ENCODE measurements at regions of chr5 and their contacts with region 1.

Region 1: DNA sequence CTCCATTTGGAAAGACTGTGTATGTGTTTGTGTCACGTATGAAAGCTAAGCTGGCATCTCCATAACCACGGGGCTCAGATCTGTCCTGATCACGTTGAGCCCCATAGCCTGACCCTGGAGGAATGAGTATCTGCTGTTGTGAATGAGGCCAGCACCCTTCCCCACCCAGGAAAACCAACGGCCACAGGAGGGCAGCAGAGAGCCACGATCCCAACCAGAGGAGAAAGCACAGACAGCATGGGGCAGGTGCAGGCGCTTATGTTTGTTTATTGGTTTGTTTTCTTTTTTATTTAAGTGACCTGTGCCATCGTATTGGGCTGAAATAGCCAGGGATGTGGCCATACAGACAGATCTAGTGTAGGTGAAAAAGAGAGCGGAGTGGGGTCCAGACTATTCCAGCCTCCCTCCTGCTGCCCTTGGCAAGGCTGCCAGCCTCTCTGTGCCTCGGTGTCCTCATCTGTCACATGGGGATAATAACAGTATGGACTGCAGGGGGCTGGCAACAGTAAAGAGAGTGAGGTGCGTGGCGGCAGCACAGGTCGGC is 12.0 kb downstream of the OR2V2 start:
- DNase-seq: peak; percentile 82
- H3K4me3 Mint-ChIP-seq: peak overlapping the region; percentile 71
- H3K27ac Mint-ChIP-seq: peak overlapping the region; percentile 95
- H3K4me1 Mint-ChIP-seq: peaks cover 27% of the 10 kb centered on the region
- H3K27me3 Mint-ChIP-seq: peaks cover 4% of the 10 kb centered on the region

Region 2: GRCh38 chr5:179387151-179388110 is 1771.9 kb before region 1 on chr5:
- intact Hi-C with region 1: no loop called
- DNase-seq: no peak
- H3K4me3 Mint-ChIP-seq: no peak overlapping the region
- H3K27ac Mint-ChIP-seq: no peak overlapping the region
- H3K4me1 Mint-ChIP-seq: no peaks in the 10 kb centered on the region
- H3K27me3 Mint-ChIP-seq: no peaks in the 10 kb centered on the region

Region 3: DNA sequence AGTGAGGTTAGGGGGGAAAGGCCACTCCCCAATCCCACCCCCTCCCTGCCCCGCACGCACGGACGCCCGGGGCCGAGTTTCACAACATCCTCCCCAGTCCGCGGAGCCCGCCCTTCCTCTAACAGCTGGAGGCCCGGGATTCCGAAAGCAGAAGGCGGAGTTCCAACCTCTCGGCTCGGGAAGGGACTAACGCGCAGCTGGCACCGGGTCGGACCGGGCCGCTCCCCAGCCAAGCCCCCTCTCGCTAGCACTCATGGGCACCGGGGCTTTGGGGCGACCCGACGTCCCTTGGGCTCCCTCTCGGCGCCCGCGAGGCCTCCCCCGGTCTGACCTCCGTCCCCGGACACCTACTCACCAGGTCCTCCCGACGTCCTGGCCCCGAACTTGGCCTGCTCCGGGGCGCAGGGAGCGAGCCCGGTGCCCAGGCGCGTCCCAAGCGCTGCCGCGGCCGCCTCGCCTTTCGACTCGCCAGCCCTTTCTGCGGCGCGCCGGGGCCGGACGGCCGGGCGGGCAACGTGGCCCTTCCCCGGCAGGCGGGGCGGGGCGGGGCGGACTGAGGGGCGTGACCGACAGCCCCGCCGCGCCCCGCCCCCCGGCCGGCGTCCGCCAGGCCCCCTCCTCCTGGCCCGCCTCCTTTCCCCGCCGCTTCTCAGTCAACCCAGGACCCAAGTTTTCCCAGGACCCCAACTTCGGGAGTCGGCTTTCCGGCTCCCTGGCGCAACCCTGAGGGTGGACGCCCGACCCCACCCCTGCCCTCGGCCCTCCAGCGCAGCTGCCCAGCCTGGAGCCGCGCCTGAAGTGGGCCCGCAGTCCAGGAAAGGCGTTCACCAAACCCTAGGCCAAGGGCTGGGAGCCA is 356.8 kb before region 1 on chr5 and contains the start of gene MGAT1:
- intact Hi-C with region 1: loop called (anchors 5 kb)
- DNase-seq: peak; percentile 72
- H3K4me3 Mint-ChIP-seq: peak within 1 kb of the TSS; percentile 94
- H3K27ac Mint-ChIP-seq: peak within 1 kb of the TSS; percentile 96
- H3K4me1 Mint-ChIP-seq: peaks cover 82% of the 10 kb centered on the region
- H3K27me3 Mint-ChIP-seq: no peaks in the 10 kb centered on the region
- total RNA-seq, gene MGAT1: 106 and 107 TPM in 2 replicates

Region 4: DNA sequence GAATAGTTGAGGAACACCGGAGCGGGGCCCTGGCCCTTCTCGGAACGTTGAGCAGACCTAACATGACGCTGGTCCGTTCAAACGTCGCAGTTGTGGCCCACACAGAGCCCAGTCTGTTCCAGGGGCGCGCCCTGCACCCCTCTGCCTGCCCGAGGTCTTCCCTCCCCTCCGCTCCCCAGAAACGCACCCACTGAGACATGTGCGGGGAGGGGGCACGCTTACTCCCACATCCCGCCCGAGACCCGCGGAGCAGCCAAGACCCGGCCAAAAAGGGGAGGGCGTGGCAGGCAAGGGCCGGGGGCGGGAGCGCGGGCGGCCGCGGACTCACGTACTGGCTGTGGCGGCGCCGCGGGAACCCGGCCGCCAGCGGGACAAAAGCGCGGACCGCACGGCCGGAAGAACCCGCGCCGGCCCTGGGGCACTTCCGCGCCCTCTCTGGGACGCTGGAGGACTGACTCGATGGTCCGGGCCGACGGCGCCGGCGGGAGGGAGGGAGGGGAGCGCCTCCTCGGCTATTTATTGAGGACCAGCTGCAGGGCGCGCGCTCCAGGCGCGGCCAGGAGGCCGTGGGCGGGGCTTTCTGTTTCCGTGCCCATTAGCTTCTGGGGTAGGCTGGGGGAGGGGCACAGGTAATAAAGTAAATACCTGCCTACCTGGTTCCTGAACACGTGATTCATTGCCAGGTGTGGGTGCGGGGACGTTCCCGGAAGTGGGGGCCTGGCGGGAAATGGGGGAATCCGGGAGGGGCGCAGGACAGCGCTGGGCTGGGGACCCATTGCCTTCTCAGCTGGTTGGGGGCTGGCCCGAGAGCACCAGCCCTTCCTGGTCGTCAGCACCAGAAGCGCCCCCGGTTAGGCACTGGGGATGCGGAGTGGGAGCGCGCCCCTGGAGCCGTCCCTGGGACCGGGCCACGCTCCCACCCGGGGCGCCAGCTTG is 298.2 kb before region 1 on chr5 and contains the start of gene ZFP62:
- intact Hi-C with region 1: loop called (anchors 1 kb)
- DNase-seq: peak; percentile 82
- H3K4me3 Mint-ChIP-seq: peak within 1 kb of the TSS; percentile 90
- H3K27ac Mint-ChIP-seq: peak within 1 kb of the TSS; percentile 91
- H3K4me1 Mint-ChIP-seq: peaks cover 18% of the 10 kb centered on the region
- H3K27me3 Mint-ChIP-seq: peaks cover 4% of the 10 kb centered on the region
- total RNA-seq, gene ZFP62: 28.4 and 28.5 TPM in 2 replicates

Region 5: DNA sequence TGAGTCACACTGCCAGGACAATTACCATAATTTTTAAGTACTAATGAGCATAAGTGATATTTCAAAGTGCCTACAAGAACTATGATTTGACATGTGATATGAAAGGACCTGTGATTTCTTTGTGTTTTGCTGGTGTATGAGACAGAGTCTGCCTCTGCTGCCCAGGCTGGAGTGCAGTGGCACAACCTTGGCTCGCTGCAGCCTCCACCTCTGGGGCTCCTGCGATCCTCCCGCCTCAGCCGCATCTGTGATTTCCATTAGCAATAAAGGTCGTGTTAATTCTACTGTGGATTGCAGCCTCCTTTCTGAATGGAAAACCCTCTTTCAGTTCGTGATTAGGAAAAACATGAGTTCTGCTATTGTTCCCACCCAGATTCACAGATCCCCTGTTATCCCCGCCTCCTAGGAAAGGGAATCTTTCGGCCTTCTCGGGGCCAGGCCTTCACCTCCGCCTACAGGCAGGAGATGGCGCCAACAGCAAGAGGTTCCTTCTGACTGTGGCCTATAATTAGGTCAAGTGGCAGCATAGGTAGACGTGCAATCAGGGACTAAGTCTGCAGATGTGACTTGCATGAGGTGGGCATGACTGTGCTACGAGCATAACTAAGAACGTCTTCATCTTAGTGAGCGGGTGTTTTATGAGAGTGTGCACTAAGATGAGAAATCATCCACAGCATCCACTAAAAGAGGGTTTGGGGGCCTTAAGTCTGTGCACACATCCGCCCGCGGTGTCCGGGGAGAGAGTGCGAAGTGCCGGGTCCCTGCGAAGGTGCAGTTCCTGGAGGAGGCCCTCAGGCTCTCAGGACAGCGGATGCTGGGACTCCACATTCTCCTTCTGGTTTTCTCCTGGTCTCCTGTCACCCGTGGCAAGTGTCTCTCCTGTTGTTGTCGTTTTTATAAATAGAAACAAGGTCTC is 22.6 kb after region 1 on chr5:
- intact Hi-C with region 1: loop called (anchors 1 kb)
- DNase-seq: no peak
- H3K4me3 Mint-ChIP-seq: peak overlapping the region; percentile 63
- H3K27ac Mint-ChIP-seq: peak overlapping the region; percentile 64
- H3K4me1 Mint-ChIP-seq: peaks cover 22% of the 10 kb centered on the region
- H3K27me3 Mint-ChIP-seq: peaks cover 5% of the 10 kb centered on the region

Region 6: GRCh38 chr5:181243512-181244343 is 84.4 kb after region 1 on chr5 and contains the start of gene RACK1:
- intact Hi-C with region 1: loop called (anchors 1 kb)
- DNase-seq: peak; percentile 82
- H3K4me3 Mint-ChIP-seq: peak within 1 kb of the TSS; percentile 96
- H3K27ac Mint-ChIP-seq: peak within 1 kb of the TSS; percentile 99
- H3K4me1 Mint-ChIP-seq: peaks cover 49% of the 10 kb centered on the region
- H3K27me3 Mint-ChIP-seq: no peaks in the 10 kb centered on the region
- total RNA-seq, gene RACK1: 2,098 and 2,121 TPM in 2 replicates